Calu3 (cell line): ENCODE measurements at regions of chr12 and their contacts with region 1.

Region 1: GRCh38 chr12:94434171-94434570 is 25.5 kb downstream of the CEP83 start:
- DNase-seq: no peak
- H3K4me3 Mint-ChIP-seq: no peak overlapping the region
- H3K27ac Mint-ChIP-seq: no peak overlapping the region
- H3K4me1 Mint-ChIP-seq: peaks cover 26% of the 10 kb centered on the region
- H3K27me3 Mint-ChIP-seq: no peaks in the 10 kb centered on the region
- CTCF ChIP-seq: no peak

Region 2: DNA sequence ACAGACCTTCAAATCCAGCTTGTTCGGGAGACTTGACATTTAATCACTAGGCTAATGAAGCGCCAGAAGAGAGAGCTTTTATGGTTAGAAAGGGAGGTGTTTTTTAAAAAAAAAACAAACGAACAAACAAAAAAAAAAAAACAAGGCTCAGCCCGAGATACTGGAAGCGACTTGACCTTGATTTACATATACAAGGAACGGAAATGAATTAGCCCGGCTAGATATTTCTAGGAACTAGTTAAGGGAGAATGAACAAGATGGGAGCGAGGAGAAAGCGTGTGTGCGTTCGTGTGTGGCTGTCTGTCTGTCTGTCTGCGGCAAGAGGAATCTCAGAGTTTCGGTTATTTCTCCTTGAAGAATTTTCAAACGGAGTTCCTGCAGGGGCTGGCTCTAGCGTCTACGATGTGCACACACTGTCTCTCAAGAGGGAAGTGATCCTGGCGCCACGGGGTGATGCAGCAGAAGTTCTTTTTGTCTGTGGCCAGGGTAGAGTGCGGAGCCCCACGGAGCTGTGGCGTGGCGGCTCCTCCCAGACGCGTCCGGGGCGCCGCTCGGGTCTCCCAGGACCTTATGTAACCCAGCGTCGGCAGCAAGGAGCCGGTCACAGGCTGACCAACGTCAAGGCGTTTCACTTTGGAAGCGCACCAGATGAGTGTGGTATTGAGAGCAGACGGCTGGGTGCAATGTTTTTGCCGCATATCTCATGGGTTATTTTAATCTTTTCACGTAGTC is 842.9 kb before region 1 on chr12:
- CTCF ChIA-PET with region 1: no interaction called
- intact Hi-C with region 1: no loop called
- DNase-seq: peak; percentile 34
- H3K4me3 Mint-ChIP-seq: peak overlapping the region; percentile 80
- H3K27ac Mint-ChIP-seq: peak overlapping the region; percentile 34
- H3K4me1 Mint-ChIP-seq: no peaks in the 10 kb centered on the region
- H3K27me3 Mint-ChIP-seq: no peaks in the 10 kb centered on the region
- CTCF ChIP-seq: no peak

Region 3: DNA sequence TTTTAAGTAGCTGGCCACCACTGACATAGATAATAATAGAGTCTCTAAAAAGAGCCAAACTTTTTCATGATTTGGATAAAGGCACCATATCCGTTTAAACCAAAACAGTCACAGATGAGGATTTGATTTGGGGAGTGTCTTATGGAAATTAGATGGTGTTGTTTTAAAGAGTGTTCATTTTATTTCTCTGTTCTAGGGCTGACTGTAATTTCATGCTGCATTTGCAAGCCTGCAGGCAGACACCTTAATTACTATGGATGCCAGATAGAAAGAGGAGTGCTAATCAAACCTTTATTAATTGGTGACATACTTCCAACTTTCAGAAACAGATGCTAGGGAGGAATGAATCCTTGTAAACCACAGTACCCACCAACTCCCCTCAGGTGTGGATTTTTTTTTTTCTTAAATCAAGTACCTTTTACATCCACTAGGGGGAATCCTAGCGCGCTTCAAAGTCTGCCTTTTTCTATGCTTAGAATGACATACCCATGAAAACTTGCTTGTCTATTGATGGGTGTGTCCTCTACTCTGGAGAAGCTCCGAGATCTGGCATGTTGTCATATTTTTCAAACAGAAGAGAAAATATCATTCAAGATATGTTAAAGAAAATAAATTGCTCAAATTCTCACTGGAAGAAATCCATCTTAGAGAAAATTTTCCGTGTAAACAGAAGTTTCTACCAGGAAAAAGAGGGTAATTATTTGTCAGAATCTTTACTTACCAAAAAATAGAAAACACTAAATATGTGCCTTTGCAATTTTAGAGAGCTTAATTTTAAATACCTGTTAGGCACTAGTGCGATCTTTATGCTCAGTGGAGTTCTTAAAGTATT is 300.0 kb before region 1 on chr12:
- CTCF ChIA-PET with region 1: no interaction called
- intact Hi-C with region 1: loop called (anchors 1 kb)
- DNase-seq: peak; percentile 36
- H3K4me3 Mint-ChIP-seq: no peak overlapping the region
- H3K27ac Mint-ChIP-seq: no peak overlapping the region
- H3K4me1 Mint-ChIP-seq: no peaks in the 10 kb centered on the region
- H3K27me3 Mint-ChIP-seq: peaks cover 68% of the 10 kb centered on the region
- CTCF ChIP-seq: peak; percentile 63

Region 4: GRCh38 chr12:94329362-94329761 is 104.8 kb before region 1 on chr12:
- CTCF ChIA-PET with region 1: interaction called, 4 read pairs
- intact Hi-C with region 1: loop called (anchors 1 kb)
- DNase-seq: no peak
- H3K4me3 Mint-ChIP-seq: no peak overlapping the region
- H3K27ac Mint-ChIP-seq: no peak overlapping the region
- H3K4me1 Mint-ChIP-seq: no peaks in the 10 kb centered on the region
- H3K27me3 Mint-ChIP-seq: no peaks in the 10 kb centered on the region
- CTCF ChIP-seq: no peak

Region 5: GRCh38 chr12:94379479-94380113 is 54.6 kb before region 1 on chr12:
- CTCF ChIA-PET with region 1: no interaction called
- intact Hi-C with region 1: loop called (anchors 5 kb)
- DNase-seq: no peak
- H3K4me3 Mint-ChIP-seq: no peak overlapping the region
- H3K27ac Mint-ChIP-seq: peak overlapping the region; percentile 69
- H3K4me1 Mint-ChIP-seq: peaks cover 16% of the 10 kb centered on the region
- H3K27me3 Mint-ChIP-seq: no peaks in the 10 kb centered on the region
- CTCF ChIP-seq: no peak